ENCODE measurements at regions of chr15 and their contacts with region 1.

Region 1: GRCh38 chr15:48336940-48337339 is 5.7 kb downstream of the DUT start:
- DNase-seq: peak; percentile 21
- H3K4me3 Mint-ChIP-seq: no peak overlapping the region
- H3K27ac Mint-ChIP-seq: no peak overlapping the region
- H3K4me1 Mint-ChIP-seq: peaks cover 54% of the 10 kb centered on the region
- H3K27me3 Mint-ChIP-seq: no peaks in the 10 kb centered on the region

Region 2: GRCh38 chr15:48250640-48251076 is 86.3 kb before region 1 on chr15:
- CTCF ChIA-PET with region 1: no interaction called
- intact Hi-C with region 1: no loop called
- DNase-seq: peak; percentile 25
- H3K4me3 Mint-ChIP-seq: no peak overlapping the region
- H3K27ac Mint-ChIP-seq: no peak overlapping the region
- H3K4me1 Mint-ChIP-seq: no peaks in the 10 kb centered on the region
- H3K27me3 Mint-ChIP-seq: peaks cover 16% of the 10 kb centered on the region

Region 3: GRCh38 chr15:48324914-48325313 is 12.0 kb before region 1 on chr15:
- CTCF ChIA-PET with region 1: no interaction called
- intact Hi-C with region 1: no loop called
- DNase-seq: no peak
- H3K4me3 Mint-ChIP-seq: no peak overlapping the region
- H3K27ac Mint-ChIP-seq: no peak overlapping the region
- H3K4me1 Mint-ChIP-seq: peaks cover 4% of the 10 kb centered on the region
- H3K27me3 Mint-ChIP-seq: no peaks in the 10 kb centered on the region

Region 4: DNA sequence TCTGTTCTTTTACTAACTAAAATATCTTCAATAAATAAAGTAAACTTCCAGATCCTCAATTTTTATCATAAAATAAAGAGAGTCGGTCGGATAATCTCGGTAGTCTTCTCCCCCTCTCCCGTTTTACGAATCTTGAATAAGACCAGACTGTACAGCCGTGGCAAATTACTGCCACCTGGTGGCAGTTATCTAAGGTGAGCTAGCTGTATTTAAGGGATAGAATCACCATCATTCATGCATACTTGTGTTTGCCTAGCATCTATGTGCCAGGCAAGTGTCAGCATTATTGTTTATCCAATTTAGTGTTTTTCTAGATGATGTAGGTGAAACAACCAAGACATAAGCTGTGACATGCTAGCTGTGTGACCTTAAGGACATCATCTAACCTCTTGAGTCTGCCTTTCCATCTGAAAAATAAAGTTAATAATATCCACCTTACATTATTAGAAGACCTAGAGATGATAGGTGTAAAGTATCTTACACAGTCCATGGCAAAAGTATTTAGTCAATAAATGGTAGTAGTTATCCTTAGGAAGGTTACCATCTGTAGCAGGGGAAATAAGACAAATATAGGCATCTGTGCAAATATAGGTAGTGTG is 15.6 kb after region 1 on chr15:
- CTCF ChIA-PET with region 1: interaction called, 21 read pairs
- intact Hi-C with region 1: no loop called
- DNase-seq: peak; percentile 68
- H3K4me3 Mint-ChIP-seq: no peak overlapping the region
- H3K27ac Mint-ChIP-seq: no peak overlapping the region
- H3K4me1 Mint-ChIP-seq: peaks cover 2% of the 10 kb centered on the region
- H3K27me3 Mint-ChIP-seq: no peaks in the 10 kb centered on the region

Region 5: DNA sequence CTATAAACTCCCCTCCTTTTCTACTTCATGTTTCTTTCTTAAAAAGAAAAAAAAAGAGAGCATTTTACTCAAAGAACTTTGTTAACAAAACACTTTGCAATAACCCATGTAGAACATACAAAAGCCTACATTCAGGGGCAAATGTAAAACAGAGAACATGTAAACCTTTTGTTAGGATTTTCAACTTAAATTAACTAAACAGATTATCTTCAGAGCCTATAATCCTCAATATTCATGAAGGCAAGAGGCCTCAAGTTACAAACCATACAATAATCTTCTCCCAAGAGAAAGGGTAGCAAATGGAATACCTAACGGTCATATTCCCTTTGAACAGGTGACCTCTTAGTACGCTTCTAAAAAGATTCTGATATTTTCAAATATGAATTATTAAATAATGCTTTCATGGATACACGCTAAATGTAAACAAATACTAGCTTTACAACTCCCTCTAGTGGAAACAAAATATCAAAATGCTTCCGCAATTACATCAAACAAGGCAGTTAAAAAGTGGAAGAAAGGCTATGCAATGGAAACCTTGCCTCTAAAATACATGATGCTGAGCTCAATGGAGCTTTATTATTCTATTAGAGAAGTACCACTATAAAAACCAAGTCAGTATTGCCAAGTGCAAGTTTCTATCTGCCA is 464.0 kb after region 1 on chr15:
- CTCF ChIA-PET with region 1: no interaction called
- intact Hi-C with region 1: loop called (anchors 5 kb)
- DNase-seq: no peak
- H3K4me3 Mint-ChIP-seq: no peak overlapping the region
- H3K27ac Mint-ChIP-seq: no peak overlapping the region
- H3K4me1 Mint-ChIP-seq: peaks cover 51% of the 10 kb centered on the region
- H3K27me3 Mint-ChIP-seq: no peaks in the 10 kb centered on the region

Measured in activated naive CD4-positive, alpha-beta T cell treated with anti-CD3 and anti-CD28 coated beads for 36 hours (primary cell).